Heart left ventricle (tissue), 16 donors: ENCODE measurements at regions of chr19 and their contacts with region 1.

Region 1: DNA sequence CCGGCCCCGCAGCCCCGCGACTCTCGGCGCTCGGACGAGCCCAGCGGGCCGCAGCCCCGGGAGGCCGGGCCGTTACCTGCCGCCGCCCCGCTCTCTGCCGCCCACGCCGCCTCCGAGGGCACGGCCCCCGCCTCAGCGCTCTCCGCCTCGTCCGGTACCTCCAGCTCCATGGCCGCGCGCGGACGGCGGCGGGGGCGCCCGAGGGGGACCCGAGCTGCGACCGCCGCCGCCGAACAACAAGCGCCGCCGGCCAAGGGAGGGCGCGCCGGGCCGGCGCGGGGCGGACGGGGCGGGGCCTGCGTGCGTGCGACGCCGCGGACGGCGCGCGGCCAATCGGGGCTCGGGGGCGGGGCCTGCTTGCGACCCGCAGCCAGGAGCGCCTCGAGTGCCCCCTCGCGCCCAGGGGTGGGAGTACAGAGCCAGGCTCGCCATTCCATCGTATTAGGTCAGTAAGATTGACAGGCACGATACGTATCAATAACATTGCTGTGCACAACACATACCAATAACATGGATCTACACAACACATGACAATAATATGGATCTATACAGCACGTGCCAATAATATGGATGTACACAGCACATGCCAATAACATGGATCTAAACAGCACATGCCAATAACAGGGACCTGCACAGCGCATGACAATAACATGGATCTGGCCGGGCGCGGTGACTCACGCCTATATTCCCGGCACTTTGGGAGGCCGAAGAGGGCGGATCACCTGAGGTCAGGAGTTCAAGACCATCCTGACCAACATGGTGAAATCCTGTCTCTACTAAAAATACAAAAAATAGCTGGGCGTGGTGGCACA is at the start of gene PIP5K1C:
- DNase-seq: peak; percentile 88 to 95 (median 92)
- ATAC-seq: peak; percentile 48 to 94 (median 89)
- H3K4me3 ChIP-seq: peak within 1 kb of the TSS; percentile 69 to 100 (median 90)
- H3K27ac ChIP-seq: peak within 1 kb of the TSS; percentile 62 to 97 (median 90)
- H3K4me1 ChIP-seq: peaks cover 0 to 30% (median 12%) of the 10 kb centered on the region in 12 donors
- H3K27me3 ChIP-seq: no peaks in the 10 kb centered on the region
- CTCF ChIP-seq: peak; percentile 63 to 91 (median 78)
- POLR2A ChIP-seq: peak in 1 of 2 donors; percentile 41
- total RNA-seq, gene PIP5K1C: 27.8 to 56.6 (median 38.2) TPM

Region 2: GRCh38 chr19:3544742-3545668 is 155.4 kb before region 1 on chr19:
- intact Hi-C with region 1: loop called in 2 of 10 experiments (anchors 5 to 10 kb)
- DNase-seq: peak; percentile 62 to 87 (median 68)
- ATAC-seq: peak; percentile 18 to 69 (median 62)
- H3K4me3 ChIP-seq: no peak overlapping the region
- H3K27ac ChIP-seq: no peak overlapping the region
- H3K4me1 ChIP-seq: peaks cover 0 to 9% (median 0%) of the 10 kb centered on the region in 12 donors
- H3K27me3 ChIP-seq: no peaks in the 10 kb centered on the region
- CTCF ChIP-seq: peak; percentile 74 to 97 (median 90)
- POLR2A ChIP-seq: no peak

Region 3: GRCh38 chr19:3670796-3671679 is 29.4 kb before region 1 on chr19:
- intact Hi-C with region 1: loop called in 9 of 10 experiments (anchors 1 to 2 kb)
- DNase-seq: peak; percentile 88 to 92 (median 90)
- ATAC-seq: peak; percentile 71 to 82 (median 78)
- H3K4me3 ChIP-seq: peak overlapping the region in 11 of 12 donors; percentile 10 to 54 (median 42)
- H3K27ac ChIP-seq: peak overlapping the region; percentile 89 to 100 (median 99)
- H3K4me1 ChIP-seq: peaks cover 0 to 81% (median 50%) of the 10 kb centered on the region in 12 donors
- H3K27me3 ChIP-seq: no peaks in the 10 kb centered on the region
- CTCF ChIP-seq: no peak
- POLR2A ChIP-seq: peak in 1 of 2 donors; percentile 39

Region 4: GRCh38 chr19:3899531-3900292 is 199.3 kb after region 1 on chr19:
- intact Hi-C with region 1: no loop called
- DNase-seq: peak in 1 of 5 donors; percentile 26
- ATAC-seq: peak in 2 of 4 donors; percentile 58 to 65
- H3K4me3 ChIP-seq: no peak overlapping the region
- H3K27ac ChIP-seq: no peak overlapping the region
- H3K4me1 ChIP-seq: no peaks in the 10 kb centered on the region
- H3K27me3 ChIP-seq: no peaks in the 10 kb centered on the region
- CTCF ChIP-seq: no peak
- POLR2A ChIP-seq: no peak